PC-9 (cell line): ENCODE measurements at regions of chr12 and their contacts with region 1.

Region 1: DNA sequence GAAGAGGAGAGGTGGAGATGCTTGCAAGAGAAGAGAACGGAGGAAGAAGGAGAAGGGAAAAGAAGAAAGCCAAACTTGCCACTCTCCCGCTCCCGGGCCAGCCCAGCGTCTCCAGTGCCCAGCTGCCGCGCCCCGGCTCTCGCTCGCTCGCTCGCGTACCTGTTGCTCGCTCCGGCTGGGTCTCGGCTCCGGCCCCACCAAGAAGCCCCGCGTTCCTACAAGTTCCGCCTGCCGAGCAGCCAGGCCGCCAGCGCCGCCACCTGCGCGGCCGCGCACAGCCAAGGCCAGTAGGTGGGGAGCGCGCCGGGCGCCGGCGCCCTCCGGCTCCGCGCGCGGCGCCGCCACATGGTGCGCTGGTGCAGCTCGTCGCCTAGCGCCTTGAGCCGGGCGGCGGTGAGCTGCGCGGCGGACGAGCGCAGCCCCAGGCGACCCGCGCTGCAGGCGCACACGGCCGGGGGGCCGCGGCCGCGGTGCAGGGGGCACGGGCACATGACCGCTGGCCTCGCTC is 370 bp downstream of the HRK start:
- DNase-seq: peak; percentile 47 to 66
- H3K4me3 ChIP-seq: peak overlapping the region; percentile 67
- H3K27ac ChIP-seq: peak overlapping the region; percentile 45
- H3K4me1 ChIP-seq: peaks cover 18% of the 10 kb centered on the region
- H3K27me3 ChIP-seq: peaks cover 3% of the 10 kb centered on the region; the same call in 1 of the 2 replicates
- CTCF ChIP-seq: no peak

Region 2: DNA sequence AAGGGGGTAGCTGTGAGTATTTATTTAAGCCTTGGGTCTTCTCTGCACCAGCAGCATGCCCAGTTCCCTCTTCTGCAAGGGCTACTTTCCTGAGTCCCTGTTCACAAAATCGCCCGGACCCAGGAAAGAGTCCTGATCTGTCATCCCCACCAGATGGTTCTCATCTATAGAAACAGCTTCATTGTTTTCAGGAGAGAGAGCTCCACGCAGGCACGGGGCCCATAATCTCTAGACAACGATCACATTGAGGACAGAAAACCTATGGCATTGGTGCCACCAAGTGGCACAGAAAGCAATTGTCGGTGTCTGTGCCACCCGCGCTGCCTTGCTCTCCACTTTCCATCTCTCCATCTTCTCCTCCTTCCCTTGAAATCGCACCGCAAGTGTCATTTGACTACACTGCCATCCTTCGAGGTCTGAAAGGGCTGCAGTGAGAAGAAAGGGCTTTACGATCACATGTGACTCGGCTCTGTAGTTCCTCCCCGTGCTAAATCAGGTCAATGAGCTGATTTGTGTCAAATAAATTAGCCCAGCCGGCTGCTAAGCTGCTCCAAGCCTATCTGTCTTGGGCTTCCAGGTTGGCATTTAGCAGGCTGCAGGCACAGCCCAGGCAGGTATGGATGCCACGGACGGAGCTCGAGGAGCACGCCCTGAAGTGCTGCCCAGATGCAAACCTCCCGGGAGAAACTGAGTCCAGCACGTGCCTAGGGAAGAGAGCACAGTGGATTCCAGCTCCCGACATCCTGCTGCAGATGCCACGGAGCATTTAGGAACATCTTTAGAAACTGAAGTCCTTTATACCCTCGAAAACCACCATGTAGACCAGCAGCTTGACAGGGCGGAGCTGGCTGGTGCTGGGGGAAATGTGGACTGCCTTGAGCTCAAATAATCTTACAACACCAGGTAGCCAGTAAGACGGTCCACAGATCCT is 171.8 kb before region 1 on chr12:
- CTCF ChIA-PET with region 1: interaction called, 3 read pairs
- POLR2A ChIA-PET with region 1: no interaction called
- intact Hi-C with region 1: loop called (anchors 2 kb)
- DNase-seq: peak; percentile 54 to 60
- H3K4me3 ChIP-seq: peak overlapping the region; percentile 30; the same call in 1 of the 2 replicates
- H3K27ac ChIP-seq: no peak overlapping the region
- H3K4me1 ChIP-seq: no peaks in the 10 kb centered on the region
- H3K27me3 ChIP-seq: no peaks in the 10 kb centered on the region
- CTCF ChIP-seq: peak; percentile 78

Region 3: GRCh38 chr12:116737774-116738700 is 142.8 kb before region 1 on chr12 and contains the starts of genes RNFT2 and SPRING1:
- CTCF ChIA-PET with region 1: interaction called, 3 read pairs
- POLR2A ChIA-PET with region 1: no interaction called
- intact Hi-C with region 1: loop called (anchors 1 kb)
- DNase-seq: peak; percentile 96 to 99
- H3K4me3 ChIP-seq: peak within 1 kb of the TSS; percentile 89
- H3K27ac ChIP-seq: no peak within 1 kb of the TSS
- H3K4me1 ChIP-seq: peaks cover 14% of the 10 kb centered on the region
- H3K27me3 ChIP-seq: no peaks in the 10 kb centered on the region
- CTCF ChIP-seq: peak; percentile 19; the same call in 1 of the 2 replicates
- total RNA-seq, gene RNFT2: 18.6 and 21.1 TPM in 2 replicates
- total RNA-seq, gene SPRING1: 29.3 and 32.5 TPM in 2 replicates

Region 4: DNA sequence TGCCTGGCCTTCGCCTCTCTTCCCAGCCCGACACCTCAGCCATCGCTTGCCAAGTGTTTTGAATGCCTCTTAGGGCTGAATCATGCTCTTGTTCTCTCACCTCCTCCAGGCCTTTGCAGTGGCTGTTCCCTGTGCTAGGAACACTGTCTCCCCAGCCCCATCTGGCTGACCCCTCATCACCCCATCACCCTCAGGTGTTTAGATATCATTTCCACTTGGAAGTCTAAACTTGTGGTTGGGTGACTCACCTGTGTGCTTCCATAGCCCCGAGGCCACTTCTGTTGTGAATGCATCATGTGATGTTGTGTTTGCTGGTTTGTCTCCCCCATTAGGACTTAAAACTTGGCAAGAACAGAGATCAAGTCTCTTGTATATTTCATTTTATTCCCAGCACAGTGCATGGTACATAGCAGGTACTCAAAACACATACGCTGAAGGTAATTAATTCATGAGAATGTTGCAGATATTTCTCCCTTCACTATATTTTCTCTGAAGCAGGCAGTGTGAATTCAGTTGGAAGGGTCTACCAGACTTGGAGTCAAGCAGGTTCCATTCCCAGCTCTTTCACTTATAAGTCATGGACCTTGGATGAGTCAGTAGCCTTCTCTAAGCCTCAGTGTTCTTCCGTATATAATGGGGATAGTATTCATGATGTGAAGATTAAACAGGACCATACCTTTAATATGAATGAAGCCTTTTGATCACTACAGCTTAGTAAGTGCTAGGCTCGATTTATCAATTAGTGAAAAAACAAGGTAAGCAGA is 67.4 kb before region 1 on chr12:
- CTCF ChIA-PET with region 1: no interaction called
- POLR2A ChIA-PET with region 1: no interaction called
- intact Hi-C with region 1: loop called (anchors 1 kb)
- DNase-seq: peak; percentile 89 to 99
- H3K4me3 ChIP-seq: no peak overlapping the region
- H3K27ac ChIP-seq: peak overlapping the region; percentile 63
- H3K4me1 ChIP-seq: peaks cover 32% of the 10 kb centered on the region
- H3K27me3 ChIP-seq: no peaks in the 10 kb centered on the region
- CTCF ChIP-seq: no peak; the same call in 1 of the 2 replicates